ENCODE measurements at regions of chr2 and their contacts with region 1.

Region 1: GRCh38 chr2:118088051-118089024 is at the start of gene INSIG2:
- DNase-seq: peak; percentile 77 to 95
- H3K4me3 ChIP-seq: peak within 1 kb of the TSS; percentile 79 to 90
- H3K27ac ChIP-seq: peak within 1 kb of the TSS; percentile 48 to 69
- H3K4me1 ChIP-seq: peaks cover 0 to 23% of the 10 kb centered on the region in 2 donors
- H3K27me3 ChIP-seq: no peaks in the 10 kb centered on the region
- CTCF ChIP-seq: peak in 1 of 3 experiments; percentile 14
- total RNA-seq, gene INSIG2: 64.2 TPM

Region 2: DNA sequence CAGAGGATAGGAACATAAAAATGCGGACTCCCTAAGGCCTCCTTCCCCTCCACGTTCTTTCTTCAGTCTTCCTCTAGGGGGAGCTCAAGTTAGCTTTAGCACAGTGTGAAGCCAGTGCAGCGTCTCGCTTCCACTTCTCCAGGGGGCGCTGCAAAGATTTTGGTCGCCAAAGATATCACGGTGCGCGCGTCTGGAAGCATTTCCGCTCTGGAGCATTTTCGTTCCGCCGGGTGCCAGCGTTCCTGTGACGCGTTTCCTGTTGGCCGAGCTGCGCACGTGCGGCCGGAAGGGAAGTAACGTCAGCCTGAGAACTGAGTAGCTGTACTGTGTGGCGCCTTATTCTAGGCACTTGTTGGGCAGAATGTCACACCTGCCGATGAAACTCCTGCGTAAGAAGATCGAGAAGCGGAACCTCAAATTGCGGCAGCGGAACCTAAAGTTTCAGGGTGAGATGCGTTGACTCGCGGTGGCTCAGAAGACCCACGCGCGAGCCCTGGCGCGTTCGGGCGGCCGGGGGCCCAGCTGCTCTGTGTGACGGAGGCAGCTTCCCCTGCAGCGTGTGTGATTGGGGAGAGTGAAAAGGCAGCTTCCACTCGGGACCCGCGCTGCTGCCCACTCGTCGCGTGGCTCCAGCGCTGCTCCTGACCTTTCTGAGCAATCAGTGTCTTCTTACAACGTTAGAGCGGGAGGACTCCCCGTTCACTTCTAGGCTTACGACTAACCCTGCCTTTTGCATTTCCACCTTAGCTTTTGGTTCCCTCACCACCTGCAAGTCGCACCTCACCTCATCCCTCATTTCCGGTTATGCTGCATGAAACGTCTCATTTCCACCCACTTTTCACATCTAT is 273.7 kb before region 1 on chr2 and contains the start of gene DDX18:
- intact Hi-C with region 1: loop called (anchors 10 kb)
- DNase-seq: peak; percentile 88 to 99
- H3K4me3 ChIP-seq: peak within 1 kb of the TSS; percentile 82 to 97
- H3K27ac ChIP-seq: peak within 1 kb of the TSS; percentile 93 to 94
- H3K4me1 ChIP-seq: peaks cover 4 to 18% of the 10 kb centered on the region in 2 donors
- H3K27me3 ChIP-seq: no peaks in the 10 kb centered on the region
- CTCF ChIP-seq: peak; percentile 91 to 99 (median 98)
- total RNA-seq, gene DDX18: 20.5 TPM

Region 3: DNA sequence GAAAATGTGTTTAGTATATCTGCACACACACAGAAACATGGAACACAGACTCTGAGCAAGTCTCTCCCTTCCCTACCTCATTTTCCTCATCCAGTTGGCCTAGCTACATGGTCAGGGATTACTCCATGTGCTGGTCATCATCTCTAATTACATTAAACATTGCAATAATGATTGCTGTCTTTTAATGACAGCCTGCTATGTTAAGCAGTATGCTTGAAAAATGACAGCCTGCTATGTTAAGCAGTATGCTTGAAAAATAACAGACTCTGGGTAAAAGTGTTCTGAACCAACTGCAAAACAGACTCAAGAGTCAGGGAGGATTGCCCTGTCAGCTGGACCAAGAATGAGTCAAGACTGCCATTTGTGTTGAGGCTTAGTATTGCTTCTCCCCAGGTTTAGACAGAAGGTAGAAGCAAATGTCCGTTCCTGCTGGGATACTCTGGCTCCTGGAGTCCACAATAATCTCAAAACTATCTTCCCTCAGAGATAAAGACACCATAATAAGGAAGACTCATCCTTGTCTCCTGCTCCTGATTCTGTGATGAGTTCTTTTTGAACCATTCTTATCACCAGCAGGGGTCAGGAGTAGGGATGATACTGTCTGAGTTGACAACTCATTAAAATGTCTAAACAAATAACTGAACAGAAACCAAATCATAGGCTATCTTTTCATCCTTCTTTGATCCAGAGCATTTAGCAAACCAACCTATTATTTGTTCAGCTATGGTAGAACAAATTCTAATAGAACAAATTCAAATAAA is 132.1 kb before region 1 on chr2:
- intact Hi-C with region 1: no loop called
- DNase-seq: no peak
- H3K4me3 ChIP-seq: no peak overlapping the region
- H3K27ac ChIP-seq: no peak overlapping the region
- H3K4me1 ChIP-seq: no peaks in the 10 kb centered on the region
- H3K27me3 ChIP-seq: no peaks in the 10 kb centered on the region
- CTCF ChIP-seq: no peak

Region 4: DNA sequence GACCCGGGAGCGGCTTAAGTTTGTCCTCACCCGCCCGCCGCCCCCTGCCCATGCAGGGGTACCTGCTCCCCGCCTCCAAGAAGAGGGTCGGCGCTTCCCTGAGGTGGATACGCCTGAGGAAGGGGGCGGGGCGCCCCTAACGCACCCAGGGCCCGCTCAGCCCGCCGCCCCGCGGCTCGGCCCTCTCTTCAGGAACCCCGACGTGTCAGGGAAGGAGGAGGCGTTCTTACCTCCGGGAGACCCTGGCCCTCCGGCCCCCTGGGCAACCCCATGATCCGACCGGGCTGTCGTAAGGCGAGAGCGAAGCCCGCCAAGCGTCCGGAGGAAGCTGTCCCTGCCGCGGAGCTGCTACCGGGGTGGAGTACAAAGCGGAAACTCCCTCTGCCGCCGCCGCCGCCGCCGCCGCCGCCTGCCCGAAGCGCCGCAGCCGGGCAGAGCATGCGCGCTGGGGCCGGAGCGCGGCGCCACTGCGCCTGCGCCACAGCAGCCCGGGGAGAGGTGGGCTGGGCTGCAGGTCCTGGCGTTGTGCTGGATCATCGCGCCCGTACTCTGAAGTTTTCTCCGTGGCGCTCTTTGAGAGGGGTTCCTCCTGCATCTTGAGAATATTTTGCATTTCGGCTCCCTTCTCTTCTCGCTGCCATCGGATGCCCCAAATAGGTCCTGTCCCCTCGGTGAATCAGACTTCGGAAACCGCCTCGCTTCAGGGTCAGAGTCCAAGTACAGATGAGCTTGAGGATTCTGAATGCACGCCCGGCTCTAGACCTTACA is 74.4 kb before region 1 on chr2 and contains the start of gene CCDC93:
- intact Hi-C with region 1: loop called (anchors 5 kb)
- DNase-seq: peak; percentile 24 to 82
- H3K4me3 ChIP-seq: peak within 1 kb of the TSS; percentile 75 to 93
- H3K27ac ChIP-seq: peak within 1 kb of the TSS; percentile 79 to 90
- H3K4me1 ChIP-seq: peaks cover 3 to 4% of the 10 kb centered on the region in 2 donors
- H3K27me3 ChIP-seq: no peaks in the 10 kb centered on the region
- CTCF ChIP-seq: no peak
- total RNA-seq, gene CCDC93: 6.3 TPM